ENCODE measurements at regions of chr3 and their contacts with region 1.

Region 1: GRCh38 chr3:4666078-4666477 is 172.9 kb downstream of the ITPR1 start:
- DNase-seq: no peak
- ATAC-seq: no peak
- H3K4me3 ChIP-seq: no peak overlapping the region
- H3K27ac ChIP-seq: no peak overlapping the region
- H3K4me1 ChIP-seq: no peaks in the 10 kb centered on the region
- H3K27me3 ChIP-seq: no peaks in the 10 kb centered on the region
- CTCF ChIP-seq: no peak
- EP300 ChIP-seq: no peak
- POLR2A ChIP-seq: no peak
- RAD21 ChIP-seq: no peak

Region 2: DNA sequence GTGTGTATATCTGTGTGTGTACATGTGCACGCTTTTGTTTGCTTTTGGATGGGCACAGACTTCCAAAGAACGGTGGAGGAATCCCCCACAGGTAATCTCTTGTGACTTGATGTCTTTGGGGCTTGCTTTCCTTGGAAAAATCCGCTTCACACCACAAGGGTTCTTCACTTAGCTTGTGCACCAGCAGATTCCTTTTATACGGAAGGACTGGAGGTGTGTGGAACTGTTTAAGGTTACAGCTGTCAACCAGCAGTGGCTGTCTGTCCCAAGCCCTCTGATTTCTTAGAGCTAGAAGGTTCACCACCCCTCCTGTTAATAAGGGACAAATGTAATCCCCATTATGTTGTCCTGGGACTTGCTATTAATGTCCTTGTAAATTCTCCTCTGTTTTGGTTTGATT is 20.5 kb after region 1 on chr3:
- CTCF ChIA-PET with region 1: no interaction called
- POLR2A ChIA-PET with region 1: no interaction called
- in situ Hi-C with region 1: no loop called
- intact Hi-C with region 1: loop called (anchors 1 kb)
- DNase-seq: no peak
- ATAC-seq: no peak
- H3K4me3 ChIP-seq: no peak overlapping the region
- H3K27ac ChIP-seq: no peak overlapping the region
- H3K4me1 ChIP-seq: no peaks in the 10 kb centered on the region
- H3K27me3 ChIP-seq: no peaks in the 10 kb centered on the region
- CTCF ChIP-seq: no peak
- EP300 ChIP-seq: no peak
- POLR2A ChIP-seq: no peak
- RAD21 ChIP-seq: no peak